ENCODE measurements at regions of chr3 and their contacts with region 1.

Region 1: DNA sequence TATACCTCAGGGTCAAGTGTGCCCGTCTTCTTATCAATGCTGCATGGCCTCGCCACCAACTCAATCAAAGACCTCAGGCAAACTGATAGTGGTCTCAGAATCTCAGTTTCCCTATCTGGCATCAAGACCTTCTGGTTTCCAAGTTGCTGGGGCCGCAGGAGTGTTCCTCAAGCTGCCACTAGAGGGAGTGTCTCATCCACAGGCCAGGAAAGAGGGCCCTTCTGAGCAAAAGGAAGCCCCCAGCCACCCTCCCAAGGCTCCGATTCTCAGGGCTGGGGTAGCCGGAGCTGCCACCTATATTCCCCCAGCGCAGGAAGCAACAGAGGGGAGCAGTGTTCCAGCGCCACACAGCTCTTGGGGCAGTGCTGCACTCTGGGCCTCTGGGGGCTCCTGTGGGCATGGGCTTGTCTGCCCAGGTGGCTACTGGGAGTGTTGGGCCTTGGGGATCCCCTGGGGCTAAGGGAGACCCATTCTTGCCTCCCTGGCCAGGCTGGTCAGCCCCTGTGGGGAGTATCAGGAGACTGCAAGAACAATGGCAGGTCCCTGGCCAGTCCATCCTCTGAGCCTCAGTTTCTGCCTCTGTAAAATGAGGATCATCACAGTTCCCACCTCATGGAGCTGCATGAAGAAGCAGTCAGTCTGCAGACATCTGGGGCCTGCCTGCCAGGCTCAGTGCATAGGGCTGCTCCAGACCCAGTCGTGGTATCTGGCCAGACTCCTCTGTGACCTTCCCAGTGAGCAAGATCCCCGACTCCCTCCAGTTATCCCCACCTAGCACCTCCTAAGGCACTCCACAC is 23.4 kb upstream of the SEC13 start:
- DNase-seq: no peak
- H3K4me3 ChIP-seq: no peak overlapping the region
- H3K27ac ChIP-seq: no peak overlapping the region
- H3K4me1 ChIP-seq: no peaks in the 10 kb centered on the region
- H3K27me3 ChIP-seq: peaks cover 0 to 9% (median 0%) of the 10 kb centered on the region in 3 donors
- CTCF ChIP-seq: peak; percentile 36 to 90 (median 66)
- EP300 ChIP-seq: no peak
- POLR2A ChIP-seq: no peak

Region 2: DNA sequence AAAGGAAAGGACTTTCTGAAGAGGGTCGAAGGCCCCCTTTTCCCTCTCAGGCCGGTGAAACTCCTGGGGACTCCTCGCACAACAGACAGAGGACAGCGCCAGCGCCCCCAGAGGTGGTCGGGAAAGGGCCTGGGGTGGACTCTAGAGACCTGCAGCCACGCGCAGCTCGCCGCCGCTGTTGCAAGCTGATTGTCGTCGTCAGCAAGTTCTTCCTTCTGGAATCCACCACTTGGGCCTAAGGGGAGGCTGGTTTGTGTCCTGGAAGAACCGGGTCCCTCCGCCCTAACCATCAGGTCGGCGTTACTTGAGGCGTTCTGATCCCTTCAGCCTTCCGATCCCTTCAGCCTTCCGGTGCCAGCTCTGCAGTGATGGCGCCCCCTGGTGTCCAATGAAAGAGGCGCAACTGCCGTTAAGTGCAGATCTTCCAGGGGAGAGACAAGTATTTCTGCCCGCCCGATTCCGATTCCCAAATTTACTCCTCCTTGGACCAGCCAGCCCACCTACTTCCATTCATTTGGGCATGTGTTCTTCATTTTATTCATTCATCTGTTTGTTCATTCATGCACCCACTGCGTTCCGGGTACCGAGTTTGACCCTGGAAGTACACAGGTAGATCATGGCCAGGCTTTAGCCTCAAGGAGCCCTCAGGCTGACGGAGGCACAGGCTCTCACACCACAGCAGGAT is 394.5 kb after region 1 on chr3:
- intact Hi-C with region 1: loop called (anchors 1 kb)
- DNase-seq: peak; percentile 80
- H3K4me3 ChIP-seq: peak overlapping the region in 3 of 4 donors; percentile 23 to 34 (median 33)
- H3K27ac ChIP-seq: no peak overlapping the region
- H3K4me1 ChIP-seq: peaks cover 0 to 9% (median 4%) of the 10 kb centered on the region in 4 donors
- H3K27me3 ChIP-seq: peaks cover 0 to 62% (median 33%) of the 10 kb centered on the region in 3 donors
- CTCF ChIP-seq: peak; percentile 59 to 89 (median 76)
- EP300 ChIP-seq: no peak
- POLR2A ChIP-seq: no peak

Measured in sigmoid colon (tissue), 7 donors.